Kidney (tissue), 22 donors: ENCODE measurements at regions of chr5 and their contacts with region 1.

Region 1: GRCh38 chr5:32076699-32077695 is 97.1 kb downstream of the GOLPH3 start:
- DNase-seq: peak in 3 of 5 donors; percentile 55 to 83 (median 79)
- H3K4me3 ChIP-seq: no peak overlapping the region
- H3K27ac ChIP-seq: no peak overlapping the region
- H3K4me1 ChIP-seq: peaks cover 0 to 2% (median 0%) of the 10 kb centered on the region in 3 donors
- H3K27me3 ChIP-seq: no peaks in the 10 kb centered on the region
- CTCF ChIP-seq: peak; percentile 71

Region 2: GRCh38 chr5:31825518-31826068 is 251.4 kb before region 1 on chr5:
- intact Hi-C with region 1: loop called (anchors 10 kb)
- DNase-seq: peak in 4 of 5 donors; percentile 60 to 89 (median 68)
- H3K4me3 ChIP-seq: no peak overlapping the region
- H3K27ac ChIP-seq: no peak overlapping the region
- H3K4me1 ChIP-seq: no peaks in the 10 kb centered on the region
- H3K27me3 ChIP-seq: no peaks in the 10 kb centered on the region
- CTCF ChIP-seq: peak; percentile 73